Breast epithelium (tissue), 4 donors: ENCODE measurements at regions of chr5 and their contacts with region 1.

Region 1: GRCh38 chr5:168765551-168766425 is 186.6 kb upstream of the PANK3 start:
- DNase-seq: no peak
- H3K4me3 ChIP-seq: no peak overlapping the region
- H3K27ac ChIP-seq: peak overlapping the region in 1 of 2 donors; percentile 48
- H3K4me1 ChIP-seq: no peaks in the 10 kb centered on the region
- H3K27me3 ChIP-seq: no peaks in the 10 kb centered on the region
- CTCF ChIP-seq: no peak
- POLR2A ChIP-seq: no peak

Region 2: DNA sequence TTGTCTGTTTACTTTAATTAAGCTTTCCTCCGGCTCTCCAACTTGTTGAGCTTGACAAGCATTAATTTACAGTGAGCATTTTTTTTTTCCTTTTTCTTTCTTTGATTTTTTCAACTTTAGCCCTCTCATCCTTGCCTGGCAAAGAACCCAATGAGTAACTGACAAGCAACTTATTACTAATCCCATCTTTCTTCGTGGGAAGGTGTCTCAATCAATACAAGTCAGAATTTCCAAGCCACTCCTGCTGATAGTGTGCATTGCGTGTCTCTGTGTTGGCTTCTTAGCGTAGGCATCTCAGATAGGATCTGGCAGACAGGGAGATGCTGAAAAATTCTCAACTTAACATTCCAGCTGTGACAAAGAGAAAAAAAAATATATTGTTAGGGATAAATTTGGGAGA is 1002.0 kb before region 1 on chr5:
- intact Hi-C with region 1: loop called (anchors 5 kb)
- DNase-seq: no peak
- H3K4me3 ChIP-seq: no peak overlapping the region
- H3K27ac ChIP-seq: no peak overlapping the region
- H3K4me1 ChIP-seq: no peaks in the 10 kb centered on the region
- H3K27me3 ChIP-seq: no peaks in the 10 kb centered on the region
- CTCF ChIP-seq: no peak
- POLR2A ChIP-seq: no peak